Mucosa of descending colon (tissue), 3 donors: ENCODE measurements at regions of chr12 and their contacts with region 1.

Region 1: DNA sequence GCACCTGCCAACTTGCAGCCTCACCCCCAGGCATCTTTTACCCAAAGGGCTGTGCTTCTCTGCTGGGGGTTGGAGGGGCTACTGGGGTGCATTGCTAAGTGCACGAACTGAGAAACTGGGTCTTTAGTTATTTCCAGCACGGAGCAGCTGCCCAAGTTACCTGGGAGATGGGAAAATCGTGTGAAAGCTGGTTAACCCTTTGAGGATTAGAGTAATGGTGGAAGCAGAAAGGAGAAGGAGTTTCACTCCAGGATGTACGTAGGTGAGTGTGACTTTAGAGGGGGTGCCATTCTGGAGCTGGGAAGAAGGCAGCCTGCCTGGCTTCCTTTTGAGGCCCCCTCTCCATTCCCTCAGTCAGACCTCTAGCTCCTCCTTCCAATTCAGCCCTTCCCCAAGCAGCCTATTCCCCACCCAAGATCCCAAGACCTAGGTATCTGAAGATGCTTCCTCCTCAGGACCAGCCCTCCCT is 1.0 kb upstream of the ADCY6 start:
- DNase-seq: no peak
- ATAC-seq: no peak
- H3K4me3 ChIP-seq: no peak overlapping the region
- H3K4me1 ChIP-seq: peaks cover 34% of the 10 kb centered on the region
- CTCF ChIP-seq: no peak

Region 2: GRCh38 chr12:48750769-48751735 is 38.8 kb before region 1 on chr12:
- intact Hi-C with region 1: loop called in 1 of 2 experiments (anchors 5 kb)
- DNase-seq: no peak
- ATAC-seq: peak; percentile 49
- H3K4me3 ChIP-seq: no peak overlapping the region
- H3K4me1 ChIP-seq: no peaks in the 10 kb centered on the region
- CTCF ChIP-seq: no peak